ENCODE measurements at regions of chr7 and their contacts with region 1.

Region 1: GRCh38 chr7:721619-722248 is 4.8 kb upstream of the DNAAF5 start:
- DNase-seq: no peak
- ATAC-seq: no peak
- H3K4me3 ChIP-seq: no peak overlapping the region
- H3K27ac ChIP-seq: no peak overlapping the region
- H3K4me1 ChIP-seq: no peaks in the 10 kb centered on the region; the same call in 2 of the 3 replicates
- CTCF ChIP-seq: no peak
- EP300 ChIP-seq: no peak
- POLR2A ChIP-seq: no peak
- RAD21 ChIP-seq: no peak

Region 2: DNA sequence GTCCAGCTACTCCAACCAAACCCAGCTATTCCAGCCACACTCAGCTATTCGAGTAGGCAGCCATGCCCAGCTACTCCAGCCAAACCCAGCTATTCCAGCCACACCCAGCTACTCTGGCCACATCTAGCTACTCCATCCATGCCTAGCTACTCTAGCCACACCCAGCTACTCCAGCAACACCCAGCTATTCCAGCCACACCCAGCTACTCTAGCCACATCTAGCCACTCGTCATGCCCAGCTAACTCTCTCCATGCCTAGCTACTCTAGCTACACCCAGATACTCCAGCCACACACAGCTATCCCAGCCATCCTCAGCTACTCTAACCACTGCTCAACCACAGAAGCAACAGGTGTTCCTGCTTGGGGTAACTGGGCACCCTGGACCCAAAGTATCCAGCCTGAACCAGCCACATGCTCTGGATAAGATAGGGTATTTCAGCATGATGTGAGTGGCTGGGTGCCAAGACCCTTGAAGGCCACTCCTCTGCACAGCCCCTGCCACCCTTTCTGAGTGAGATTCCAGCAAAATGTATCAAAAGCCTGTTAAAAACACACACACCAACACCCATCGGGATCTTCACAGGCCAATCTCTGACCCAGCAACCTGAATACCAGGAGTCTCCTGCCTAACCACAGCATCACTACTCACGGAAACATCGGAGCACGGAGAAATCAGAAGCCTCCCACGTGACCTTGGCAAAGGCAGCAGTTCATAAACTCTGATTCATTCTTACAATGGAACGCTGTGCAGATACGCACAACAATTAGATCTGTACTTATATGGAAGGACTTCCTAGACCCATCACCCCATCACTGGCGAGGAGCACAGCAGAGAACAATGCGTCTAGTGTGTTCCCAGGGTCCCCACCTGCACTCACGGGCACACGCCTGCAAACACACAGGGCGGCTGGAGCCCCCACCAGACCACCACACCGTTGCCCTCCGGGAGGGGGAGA is 47.0 kb before region 1 on chr7:
- CTCF ChIA-PET with region 1: no interaction called
- POLR2A ChIA-PET with region 1: no interaction called
- DNase-seq: no peak
- ATAC-seq: no peak
- H3K4me3 ChIP-seq: no peak overlapping the region
- H3K27ac ChIP-seq: no peak overlapping the region
- H3K4me1 ChIP-seq: no peaks in the 10 kb centered on the region
- CTCF ChIP-seq: no peak
- EP300 ChIP-seq: no peak
- POLR2A ChIP-seq: no peak
- RAD21 ChIP-seq: no peak

Region 3: GRCh38 chr7:711093-711921 is 10.4 kb before region 1 on chr7:
- CTCF ChIA-PET with region 1: no interaction called
- POLR2A ChIA-PET with region 1: interaction called, 14 read pairs
- DNase-seq: no peak
- ATAC-seq: no peak
- H3K4me3 ChIP-seq: no peak overlapping the region
- H3K27ac ChIP-seq: no peak overlapping the region
- H3K4me1 ChIP-seq: no peaks in the 10 kb centered on the region
- CTCF ChIP-seq: no peak
- EP300 ChIP-seq: no peak
- POLR2A ChIP-seq: no peak
- RAD21 ChIP-seq: no peak

Measured in A549 (cell line).